Activated CD8-positive, alpha-beta T cell treated with anti-CD3 and anti-CD28 coated beads, Interleukin-2, amount 10 ng/mL, durations not matched to agents 7 days and 5 days (primary cell): ENCODE measurements at regions of chr15 and their contacts with region 1.

Region 1: DNA sequence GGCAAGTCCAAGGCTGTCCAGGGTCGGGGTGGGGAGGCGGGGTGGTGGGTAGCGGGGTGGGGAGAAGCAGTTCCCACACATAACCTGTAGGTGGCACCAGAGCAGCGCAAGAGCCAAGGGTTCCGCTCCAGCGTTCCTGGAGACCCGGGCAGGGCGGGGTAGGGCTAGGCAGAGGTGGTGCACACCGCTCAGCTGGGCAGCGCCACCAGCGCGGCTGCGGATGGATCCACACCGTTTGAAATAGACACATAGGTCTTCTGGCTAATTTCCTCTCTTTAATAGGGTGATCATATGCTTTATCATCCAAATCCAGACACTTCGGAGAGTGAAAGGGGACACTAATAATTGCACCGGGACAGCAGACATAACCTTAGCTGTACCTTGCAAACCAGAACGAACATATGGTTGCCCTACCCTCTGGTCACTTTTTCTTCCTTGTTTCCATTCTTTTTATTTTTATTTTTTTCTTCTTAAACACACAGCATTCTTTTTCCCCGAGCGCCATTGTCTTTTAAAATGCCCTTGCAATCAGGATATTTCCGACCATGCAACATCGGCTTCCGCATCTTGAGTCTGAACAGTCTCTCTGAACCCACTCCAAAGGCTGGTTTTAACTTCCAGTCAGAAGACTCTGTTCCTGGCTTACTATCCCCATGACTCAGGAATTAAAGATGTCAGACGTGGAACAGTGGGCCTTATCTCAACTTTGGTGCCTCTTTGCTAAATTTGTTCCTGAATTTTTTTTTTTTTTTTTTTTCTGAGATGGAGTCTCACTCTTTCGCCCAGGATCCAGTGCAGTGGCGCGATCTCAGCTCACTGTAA is 12.5 kb upstream of the ZSCAN2 start:
- DNase-seq: peak; percentile 91
- ATAC-seq: peak; percentile 100
- H3K4me3 Mint-ChIP-seq: peak overlapping the region; percentile 59
- H3K27ac Mint-ChIP-seq: no peak overlapping the region
- H3K4me1 Mint-ChIP-seq: peaks cover 5% of the 10 kb centered on the region
- H3K27me3 Mint-ChIP-seq: peaks cover 14% of the 10 kb centered on the region

Region 2: DNA sequence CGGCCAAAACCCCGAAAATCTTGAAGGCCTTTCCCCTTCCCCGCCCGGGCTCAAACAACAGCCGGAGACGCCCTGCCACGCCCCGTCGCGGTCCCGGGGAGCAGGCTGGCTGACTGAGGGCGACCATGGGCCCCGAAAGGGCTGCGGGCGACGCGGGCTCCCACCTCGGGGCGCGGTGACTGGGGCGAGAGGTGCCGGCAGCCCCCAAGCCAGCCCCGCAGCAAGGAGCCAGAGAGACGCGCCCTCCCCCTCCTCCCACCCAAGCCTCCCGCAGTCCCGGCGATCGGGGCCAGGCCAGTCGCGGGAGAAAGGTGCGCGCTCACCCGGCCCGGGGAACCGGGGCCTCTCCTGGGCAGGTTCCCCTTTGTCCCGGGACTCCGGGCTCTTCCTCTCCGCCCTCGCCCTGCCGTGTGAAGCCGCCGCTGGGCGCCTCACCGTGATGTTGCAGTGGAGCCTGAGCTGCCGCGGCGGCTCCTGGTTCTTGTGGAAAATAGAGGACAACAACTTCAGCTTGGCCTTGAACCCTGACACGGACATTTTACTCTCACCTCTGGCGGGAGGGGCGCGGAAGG is 18.0 kb before region 1 on chr15:
- CTCF ChIA-PET with region 1: interaction called, 40 read pairs
- POLR2A ChIA-PET with region 1: interaction called, 3 read pairs
- DNase-seq: peak; percentile 68
- ATAC-seq: peak; percentile 77
- H3K4me3 Mint-ChIP-seq: peak overlapping the region; percentile 84
- H3K27ac Mint-ChIP-seq: peak overlapping the region; percentile 92
- H3K4me1 Mint-ChIP-seq: peaks cover 22% of the 10 kb centered on the region
- H3K27me3 Mint-ChIP-seq: no peaks in the 10 kb centered on the region

Region 3: GRCh38 chr15:84611631-84612030 is 23.4 kb after region 1 on chr15:
- CTCF ChIA-PET with region 1: no interaction called
- POLR2A ChIA-PET with region 1: no interaction called
- DNase-seq: no peak
- ATAC-seq: no peak
- H3K4me3 Mint-ChIP-seq: no peak overlapping the region
- H3K27ac Mint-ChIP-seq: no peak overlapping the region
- H3K4me1 Mint-ChIP-seq: no peaks in the 10 kb centered on the region
- H3K27me3 Mint-ChIP-seq: no peaks in the 10 kb centered on the region

Region 4: DNA sequence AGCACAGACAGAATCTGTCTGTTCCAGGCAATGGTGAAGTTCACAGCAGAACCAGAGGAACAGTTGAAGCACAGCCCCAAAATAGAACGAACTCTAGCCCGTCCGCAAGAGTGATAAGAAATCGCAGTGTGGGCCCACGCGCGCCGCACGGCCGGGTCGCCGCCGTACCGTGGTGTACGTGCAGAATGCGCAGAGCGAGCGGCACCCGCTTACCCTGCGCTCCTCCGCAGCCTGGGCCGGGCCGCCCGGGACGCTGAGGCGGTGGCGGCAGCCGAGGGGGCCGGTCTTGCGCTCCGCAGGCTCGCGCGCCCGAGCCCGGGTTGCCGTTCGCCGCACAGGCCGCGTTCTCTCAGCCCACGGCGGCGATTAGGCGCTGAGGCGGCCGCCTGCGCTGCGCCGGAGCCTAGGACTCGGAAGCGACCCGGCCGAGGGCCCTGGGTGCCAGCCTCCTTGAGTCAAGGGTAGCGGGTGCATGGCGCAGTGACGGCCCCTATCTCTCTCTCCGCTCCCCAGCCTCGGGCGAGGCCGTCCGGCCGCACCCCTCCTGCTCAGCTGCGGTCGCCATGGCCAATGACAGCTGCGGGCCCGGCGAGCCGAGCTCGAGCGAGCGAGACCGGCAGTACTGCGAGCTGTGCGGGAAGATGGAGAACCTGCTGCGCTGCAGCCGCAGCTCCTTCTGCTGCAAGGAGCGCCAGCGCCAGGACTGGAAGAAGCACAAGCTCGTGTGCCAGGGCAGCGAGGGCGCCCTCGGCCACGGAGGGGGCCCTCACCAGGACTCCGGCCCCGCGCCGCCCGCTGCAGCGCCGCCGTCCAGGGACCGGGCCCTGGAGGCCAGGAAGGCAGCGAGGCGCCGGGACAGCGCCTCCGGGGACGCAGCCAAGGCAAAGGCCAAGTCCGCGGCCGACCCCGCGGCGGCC is 45.3 kb after region 1 on chr15:
- CTCF ChIA-PET with region 1: interaction called, 12 read pairs
- POLR2A ChIA-PET with region 1: no interaction called
- DNase-seq: peak; percentile 73
- ATAC-seq: peak; percentile 58
- H3K4me3 Mint-ChIP-seq: peak overlapping the region; percentile 88
- H3K27ac Mint-ChIP-seq: peak overlapping the region; percentile 94
- H3K4me1 Mint-ChIP-seq: peaks cover 55% of the 10 kb centered on the region
- H3K27me3 Mint-ChIP-seq: no peaks in the 10 kb centered on the region

Region 5: GRCh38 chr15:84879088-84879792 is 291.0 kb after region 1 on chr15:
- CTCF ChIA-PET with region 1: interaction called, 14 read pairs
- POLR2A ChIA-PET with region 1: no interaction called
- DNase-seq: no peak
- ATAC-seq: no peak
- H3K4me3 Mint-ChIP-seq: no peak overlapping the region
- H3K27ac Mint-ChIP-seq: no peak overlapping the region
- H3K4me1 Mint-ChIP-seq: peaks cover 2% of the 10 kb centered on the region
- H3K27me3 Mint-ChIP-seq: peaks cover 3% of the 10 kb centered on the region

Region 6: DNA sequence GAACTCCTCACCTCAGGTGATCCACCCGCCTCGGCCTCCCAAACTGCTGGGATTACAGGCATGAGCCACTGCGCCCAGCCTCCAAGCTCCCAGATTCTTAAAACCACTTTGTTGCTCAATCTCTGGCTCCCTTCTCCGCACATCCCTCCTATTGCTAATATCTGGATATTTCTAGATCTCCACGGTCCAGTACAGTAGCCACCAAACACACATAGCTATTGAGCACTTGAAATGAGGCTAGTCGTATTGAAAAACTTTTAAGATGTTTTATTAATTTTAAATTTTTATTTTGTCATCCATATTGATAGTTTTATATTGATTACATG is 340.5 kb after region 1 on chr15:
- CTCF ChIA-PET with region 1: interaction called, 27 read pairs
- POLR2A ChIA-PET with region 1: no interaction called
- DNase-seq: no peak
- ATAC-seq: no peak
- H3K4me3 Mint-ChIP-seq: no peak overlapping the region
- H3K27ac Mint-ChIP-seq: no peak overlapping the region
- H3K4me1 Mint-ChIP-seq: peaks cover 5% of the 10 kb centered on the region
- H3K27me3 Mint-ChIP-seq: no peaks in the 10 kb centered on the region